ENCODE measurements at regions of chr9 and their contacts with region 1.

Region 1: DNA sequence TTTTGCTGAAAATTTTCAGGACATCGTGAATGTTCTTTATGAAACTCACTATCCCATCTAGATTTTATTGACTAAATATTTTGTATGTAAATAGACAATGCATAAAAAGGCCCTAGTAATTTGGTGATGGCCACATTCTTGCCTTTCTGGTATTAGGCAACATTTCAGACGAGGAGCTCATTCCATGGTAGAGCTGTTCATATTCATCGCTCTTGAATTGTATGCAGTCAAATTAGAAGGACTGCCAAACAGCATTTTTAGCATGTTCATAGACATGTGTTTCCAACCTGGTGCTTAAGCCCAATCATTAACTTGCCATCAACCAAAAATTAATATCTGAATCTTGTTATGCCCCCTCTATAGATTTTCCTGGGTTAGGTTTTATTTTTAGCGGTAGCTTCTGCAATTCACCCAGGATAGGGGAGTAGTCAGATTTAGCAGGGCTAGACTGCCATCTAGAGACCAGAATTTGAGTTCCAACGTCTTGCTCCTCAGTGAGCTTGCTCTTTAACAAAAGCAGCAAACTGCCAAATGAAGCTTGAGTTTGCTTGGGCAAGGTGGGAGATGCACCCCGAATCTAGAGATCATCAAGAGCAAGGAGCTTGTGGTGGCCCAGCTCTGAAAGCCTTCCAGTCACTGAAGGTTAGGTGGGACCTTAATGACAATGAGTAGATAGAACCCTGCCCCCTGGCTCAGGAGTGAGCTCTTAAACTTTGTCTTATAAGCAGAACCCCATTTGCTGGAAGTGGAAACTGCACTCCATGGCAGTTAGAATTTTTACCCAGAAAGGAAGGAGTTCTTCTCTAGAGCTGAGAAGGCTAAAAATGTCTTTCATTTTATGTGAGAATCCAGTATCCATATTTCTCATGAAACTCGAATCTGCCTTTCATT is 456.2 kb downstream of the RASEF start:
- DNase-seq: peak; percentile 49
- H3K4me3 ChIP-seq: no peak overlapping the region; a peak in 1 of 4 replicates
- H3K27ac ChIP-seq: no peak overlapping the region
- H3K4me1 ChIP-seq: peaks cover 0 to 14% of the 10 kb centered on the region in 2 experiments; a peak in 2 of 4 replicates
- H3K27me3 ChIP-seq: no peaks in the 10 kb centered on the region
- CTCF ChIP-seq: peak; percentile 72
- EP300 ChIP-seq: no peak
- RAD21 ChIP-seq: peak; percentile 87

Region 2: DNA sequence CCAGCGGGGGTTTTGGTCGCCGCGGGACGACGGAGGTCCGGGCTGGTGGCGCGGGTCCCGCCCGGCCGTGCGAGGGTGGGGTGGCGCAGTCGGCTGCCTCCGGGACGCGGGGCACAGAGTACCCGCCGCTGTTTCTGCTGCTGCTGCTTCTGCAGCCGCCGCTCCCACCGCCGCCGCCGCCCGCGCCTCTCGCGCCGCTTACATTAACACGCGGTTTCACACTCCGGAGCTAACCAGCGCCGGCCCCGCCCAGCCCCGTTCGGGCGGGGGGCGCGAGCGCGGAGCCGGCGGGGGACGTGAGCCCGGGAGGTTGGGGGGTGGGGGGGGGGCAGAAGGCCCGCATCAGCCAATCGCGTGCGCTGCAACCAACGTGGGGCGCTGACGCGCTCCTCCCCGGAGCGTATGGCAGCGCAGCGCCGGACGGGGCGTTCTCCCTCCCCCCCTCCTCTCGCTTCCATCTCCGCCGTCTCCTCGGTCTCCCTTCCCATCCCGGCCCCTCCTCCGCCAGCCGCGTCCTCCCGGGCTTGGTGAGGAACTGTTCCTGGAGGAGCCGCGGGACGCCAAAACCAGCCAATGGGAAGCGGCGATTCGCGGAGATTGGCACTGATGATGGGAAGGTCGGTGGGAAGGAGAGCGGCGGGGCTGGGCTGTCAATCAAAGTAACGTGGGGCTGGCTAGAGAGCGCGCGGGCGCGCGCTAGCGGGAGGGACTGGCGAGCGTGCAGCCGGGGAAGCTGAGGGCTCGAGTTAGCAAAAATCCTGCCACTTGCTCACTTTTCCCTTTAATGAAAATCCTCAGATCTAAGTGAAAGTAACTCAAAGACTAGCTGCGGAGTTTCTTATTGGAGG is 917.2 kb before region 1 on chr9 and contains the start of gene TLE1:
- CTCF ChIA-PET with region 1: interaction called, 12 read pairs
- POLR2A ChIA-PET with region 1: no interaction called
- DNase-seq: peak; percentile 95
- H3K4me3 ChIP-seq: peak within 1 kb of the TSS; percentile 73 to 76
- H3K27ac ChIP-seq: peak within 1 kb of the TSS; percentile 43 to 54
- H3K4me1 ChIP-seq: peaks cover 11 to 22% of the 10 kb centered on the region in 2 experiments; a peak in 2 of 4 replicates
- H3K27me3 ChIP-seq: no peaks in the 10 kb centered on the region
- CTCF ChIP-seq: peak; percentile 7; the same call in 1 of the 2 replicates
- EP300 ChIP-seq: peak in 1 of 2 experiments; percentile 10; a peak in 2 of 4 replicates
- RAD21 ChIP-seq: peak; percentile 5; the same call in 1 of the 2 replicates
- polyA plus RNA-seq, gene TLE1: 33.0 and 34.8 TPM in 2 replicates

Region 3: GRCh38 chr9:82332018-82332773 is 274.5 kb before region 1 on chr9:
- CTCF ChIA-PET with region 1: no interaction called
- POLR2A ChIA-PET with region 1: no interaction called
- DNase-seq: no peak
- H3K4me3 ChIP-seq: peak overlapping the region in 1 of 2 experiments; percentile 39; a peak in 1 of 4 replicates
- H3K27ac ChIP-seq: peak overlapping the region; percentile 69 to 77; a peak in 3 of 4 replicates
- H3K4me1 ChIP-seq: peaks cover 2 to 14% of the 10 kb centered on the region in 2 experiments; a peak in 3 of 4 replicates
- H3K27me3 ChIP-seq: no peaks in the 10 kb centered on the region
- CTCF ChIP-seq: no peak
- EP300 ChIP-seq: peak; percentile 18 to 93; a peak in 2 of 4 replicates
- RAD21 ChIP-seq: no peak

Region 4: GRCh38 chr9:82532504-82533180 is 74.1 kb before region 1 on chr9:
- CTCF ChIA-PET with region 1: interaction called, 34 read pairs
- POLR2A ChIA-PET with region 1: no interaction called
- DNase-seq: peak; percentile 28
- H3K4me3 ChIP-seq: no peak overlapping the region
- H3K27ac ChIP-seq: peak overlapping the region in 1 of 2 experiments; percentile 78; a peak in 1 of 4 replicates
- H3K4me1 ChIP-seq: peaks cover 0 to 3% of the 10 kb centered on the region in 2 experiments; a peak in 2 of 4 replicates
- H3K27me3 ChIP-seq: no peaks in the 10 kb centered on the region
- CTCF ChIP-seq: peak; percentile 49
- EP300 ChIP-seq: no peak
- RAD21 ChIP-seq: peak; percentile 81

Region 5: DNA sequence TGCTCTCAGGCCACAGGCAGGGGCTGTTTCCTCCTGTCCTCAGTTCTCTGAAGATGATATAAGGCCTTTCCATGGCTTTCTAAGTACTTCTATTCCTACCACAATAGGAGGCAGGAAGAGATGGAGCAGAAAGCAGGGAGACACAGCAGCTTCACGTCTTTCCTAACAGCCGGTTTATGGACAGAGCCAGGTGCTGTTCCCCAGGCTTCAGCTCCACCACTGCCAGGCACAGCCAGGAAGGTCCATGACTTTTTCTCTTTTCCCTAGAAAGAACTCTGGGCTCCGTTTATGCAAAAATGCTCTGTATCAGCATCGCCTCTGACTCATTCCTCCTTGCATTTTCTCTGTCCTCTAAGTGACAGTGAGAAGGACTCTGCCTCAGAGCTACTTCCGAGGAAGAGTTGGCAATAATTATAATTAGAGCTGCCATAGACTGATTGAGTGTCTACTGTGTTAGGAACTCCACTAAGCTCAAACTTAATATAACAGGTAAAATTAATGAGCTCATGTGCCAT is 22.3 kb before region 1 on chr9:
- CTCF ChIA-PET with region 1: no interaction called
- POLR2A ChIA-PET with region 1: no interaction called
- DNase-seq: no peak
- H3K4me3 ChIP-seq: no peak overlapping the region
- H3K27ac ChIP-seq: no peak overlapping the region
- H3K4me1 ChIP-seq: peaks cover 0 to 8% of the 10 kb centered on the region in 2 experiments; a peak in 2 of 4 replicates
- H3K27me3 ChIP-seq: no peaks in the 10 kb centered on the region
- CTCF ChIP-seq: no peak
- EP300 ChIP-seq: no peak
- RAD21 ChIP-seq: no peak

Region 6: DNA sequence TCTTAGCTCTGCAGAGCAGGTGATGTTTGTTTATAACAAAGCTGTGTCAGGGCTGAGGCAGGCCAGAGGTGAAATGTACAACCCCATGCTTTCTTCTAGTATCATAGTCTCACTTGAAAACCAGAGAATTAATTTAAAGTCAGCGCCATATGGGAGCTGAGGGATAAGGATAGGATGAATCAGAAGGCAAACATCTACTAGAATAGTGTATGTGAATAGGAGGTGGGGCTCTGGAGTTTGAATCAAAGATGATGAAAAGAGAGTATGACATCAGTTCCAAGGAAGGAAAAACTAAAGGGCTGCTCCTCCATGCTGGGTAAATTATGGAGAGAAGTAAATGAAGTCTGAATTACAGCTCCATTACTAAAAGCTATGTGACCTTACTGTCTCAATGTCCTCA is 14.7 kb after region 1 on chr9:
- CTCF ChIA-PET with region 1: interaction called, 15 read pairs
- POLR2A ChIA-PET with region 1: no interaction called
- DNase-seq: no peak
- H3K4me3 ChIP-seq: no peak overlapping the region
- H3K27ac ChIP-seq: no peak overlapping the region
- H3K4me1 ChIP-seq: no peaks in the 10 kb centered on the region
- H3K27me3 ChIP-seq: no peaks in the 10 kb centered on the region
- CTCF ChIP-seq: no peak
- EP300 ChIP-seq: no peak
- RAD21 ChIP-seq: no peak

Region 7: GRCh38 chr9:82912645-82913044 is 305.9 kb after region 1 on chr9:
- CTCF ChIA-PET with region 1: interaction called, 14 read pairs
- POLR2A ChIA-PET with region 1: no interaction called
- DNase-seq: no peak
- H3K4me3 ChIP-seq: no peak overlapping the region
- H3K27ac ChIP-seq: no peak overlapping the region
- H3K4me1 ChIP-seq: no peaks in the 10 kb centered on the region
- H3K27me3 ChIP-seq: no peaks in the 10 kb centered on the region
- CTCF ChIP-seq: no peak
- EP300 ChIP-seq: no peak
- RAD21 ChIP-seq: peak; percentile 59; the same call in 1 of the 2 replicates

Region 8: DNA sequence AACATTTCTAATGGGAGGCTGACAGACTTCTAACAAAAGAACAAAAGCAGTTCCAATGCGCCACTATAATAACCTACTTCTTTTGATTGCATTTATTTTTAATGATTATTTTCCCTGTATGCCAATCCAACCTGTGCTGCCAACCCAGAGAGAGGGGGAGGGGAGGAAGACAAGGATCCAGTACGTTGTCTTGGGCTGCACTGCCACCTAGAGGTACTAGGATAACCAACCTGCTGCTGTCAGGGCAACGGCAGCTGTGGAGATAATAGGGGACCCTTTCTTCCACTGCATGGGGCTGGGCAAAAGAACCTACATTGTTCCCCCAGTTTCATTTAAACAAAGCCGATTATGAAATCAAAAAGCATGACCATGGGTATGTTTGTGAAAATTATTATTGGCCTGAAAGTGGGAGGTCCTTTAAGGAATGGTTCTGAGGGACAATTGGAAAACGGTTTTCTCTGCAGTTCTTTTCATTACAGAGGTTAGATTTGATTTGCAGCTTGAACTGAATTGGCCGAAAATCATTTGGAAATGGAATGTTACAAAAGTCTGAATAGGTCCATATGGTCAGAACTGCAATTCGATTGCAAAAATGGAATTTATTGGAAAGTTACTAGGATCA is 354.9 kb after region 1 on chr9:
- CTCF ChIA-PET with region 1: interaction called, 18 read pairs
- POLR2A ChIA-PET with region 1: interaction called, 3 read pairs
- DNase-seq: peak; percentile 74
- H3K4me3 ChIP-seq: no peak overlapping the region; a peak in 1 of 4 replicates
- H3K27ac ChIP-seq: no peak overlapping the region; a peak in 1 of 4 replicates
- H3K4me1 ChIP-seq: peaks cover 0 to 8% of the 10 kb centered on the region in 2 experiments; a peak in 2 of 4 replicates
- H3K27me3 ChIP-seq: no peaks in the 10 kb centered on the region; the same call in 1 of the 2 replicates
- CTCF ChIP-seq: peak; percentile 87
- EP300 ChIP-seq: no peak
- RAD21 ChIP-seq: peak; percentile 97